ENCODE measurements at regions of chr7 and their contacts with region 1.

Region 1: DNA sequence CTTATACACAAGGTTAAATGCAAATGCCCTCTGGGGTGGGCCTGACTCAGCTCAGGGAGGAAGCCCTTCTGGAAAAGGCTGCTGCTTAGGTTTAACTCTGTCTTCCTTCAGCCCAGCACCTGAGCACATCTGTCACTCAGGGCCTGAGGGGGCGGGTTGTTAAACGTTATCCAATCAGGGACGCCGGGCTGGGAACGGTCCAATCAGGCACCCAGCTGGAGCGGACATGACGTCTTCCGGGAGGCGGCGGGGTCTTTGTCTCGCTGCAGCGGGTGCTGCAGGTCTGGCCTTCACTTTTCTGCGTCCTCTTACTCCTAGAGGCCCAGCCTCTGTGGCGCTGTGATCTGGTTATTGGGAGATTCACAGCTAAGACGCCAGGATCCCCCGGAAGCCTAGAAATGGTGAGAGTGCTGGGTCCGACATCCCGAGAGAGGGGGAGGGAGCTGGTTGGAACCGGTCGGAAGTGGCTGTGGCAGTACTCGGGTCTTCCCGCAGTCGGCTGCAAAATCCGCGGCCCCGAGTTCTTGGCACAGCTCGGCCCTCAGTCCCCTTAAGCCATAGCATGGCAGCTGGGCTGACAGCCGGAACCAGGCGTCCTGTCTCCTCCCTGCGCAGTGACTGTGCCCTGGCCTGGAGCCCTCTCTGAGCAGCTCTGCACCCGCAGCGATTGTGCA is at the start of gene ZNF138:
- DNase-seq: peak; percentile 91
- ATAC-seq: peak; percentile 100
- H3K4me3 ChIP-seq: peak within 1 kb of the TSS; percentile 90
- H3K27ac ChIP-seq: peak within 1 kb of the TSS; percentile 83
- H3K4me1 ChIP-seq: no peaks in the 10 kb centered on the region
- H3K27me3 ChIP-seq: no peaks in the 10 kb centered on the region
- CTCF ChIP-seq: no peak
- POLR2A ChIP-seq: peak; percentile 47; the same call in 1 of the 2 replicates
- RAD21 ChIP-seq: no peak
- total RNA-seq, gene ZNF138: 3.6 and 6.1 TPM in 2 replicates

Region 2: GRCh38 chr7:64371106-64371505 is 423.2 kb before region 1 on chr7:
- CTCF ChIA-PET with region 1: no interaction called
- POLR2A ChIA-PET with region 1: no interaction called
- dilution Hi-C with region 1: no loop called
- in situ Hi-C with region 1: no loop called
- intact Hi-C with region 1: no loop called
- DNase-seq: no peak
- ATAC-seq: no peak
- H3K4me3 ChIP-seq: no peak overlapping the region
- H3K27ac ChIP-seq: no peak overlapping the region
- H3K4me1 ChIP-seq: no peaks in the 10 kb centered on the region
- H3K27me3 ChIP-seq: no peaks in the 10 kb centered on the region
- CTCF ChIP-seq: no peak
- POLR2A ChIP-seq: no peak
- RAD21 ChIP-seq: no peak

Region 3: GRCh38 chr7:64494912-64495461 is 299.3 kb before region 1 on chr7:
- CTCF ChIA-PET with region 1: no interaction called
- POLR2A ChIA-PET with region 1: no interaction called
- dilution Hi-C with region 1: no loop called
- in situ Hi-C with region 1: no loop called
- intact Hi-C with region 1: no loop called
- DNase-seq: no peak
- ATAC-seq: peak; percentile 49
- H3K4me3 ChIP-seq: peak overlapping the region; percentile 10; the same call in 1 of the 2 replicates
- H3K27ac ChIP-seq: no peak overlapping the region
- H3K4me1 ChIP-seq: no peaks in the 10 kb centered on the region
- H3K27me3 ChIP-seq: no peaks in the 10 kb centered on the region
- CTCF ChIP-seq: no peak
- POLR2A ChIP-seq: no peak
- RAD21 ChIP-seq: no peak

Region 4: DNA sequence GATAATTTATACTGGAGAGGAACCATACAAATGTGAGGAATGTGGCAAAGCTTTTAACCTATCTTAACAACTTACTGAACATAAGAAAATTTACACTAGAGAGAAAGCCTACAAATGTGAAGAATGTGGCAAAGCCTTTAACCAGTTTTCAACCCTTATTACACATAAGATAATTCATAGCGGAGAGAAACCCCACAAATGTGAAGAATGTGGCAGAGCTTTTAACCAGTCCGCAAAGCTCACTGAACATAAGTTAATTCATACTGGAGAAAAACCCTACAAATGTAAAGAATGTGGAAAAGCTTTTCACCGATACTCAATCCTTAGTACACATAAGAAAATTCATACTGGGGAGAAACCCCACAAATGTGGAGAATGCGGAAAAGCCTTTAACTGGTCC is 37.8 kb after region 1 on chr7:
- CTCF ChIA-PET with region 1: no interaction called
- POLR2A ChIA-PET with region 1: no interaction called
- dilution Hi-C with region 1: no loop called
- in situ Hi-C with region 1: no loop called
- intact Hi-C with region 1: no loop called
- DNase-seq: no peak
- ATAC-seq: no peak
- H3K4me3 ChIP-seq: no peak overlapping the region
- H3K27ac ChIP-seq: no peak overlapping the region
- H3K4me1 ChIP-seq: no peaks in the 10 kb centered on the region
- H3K27me3 ChIP-seq: no peaks in the 10 kb centered on the region
- CTCF ChIP-seq: no peak
- POLR2A ChIP-seq: no peak
- RAD21 ChIP-seq: no peak

Region 5: DNA sequence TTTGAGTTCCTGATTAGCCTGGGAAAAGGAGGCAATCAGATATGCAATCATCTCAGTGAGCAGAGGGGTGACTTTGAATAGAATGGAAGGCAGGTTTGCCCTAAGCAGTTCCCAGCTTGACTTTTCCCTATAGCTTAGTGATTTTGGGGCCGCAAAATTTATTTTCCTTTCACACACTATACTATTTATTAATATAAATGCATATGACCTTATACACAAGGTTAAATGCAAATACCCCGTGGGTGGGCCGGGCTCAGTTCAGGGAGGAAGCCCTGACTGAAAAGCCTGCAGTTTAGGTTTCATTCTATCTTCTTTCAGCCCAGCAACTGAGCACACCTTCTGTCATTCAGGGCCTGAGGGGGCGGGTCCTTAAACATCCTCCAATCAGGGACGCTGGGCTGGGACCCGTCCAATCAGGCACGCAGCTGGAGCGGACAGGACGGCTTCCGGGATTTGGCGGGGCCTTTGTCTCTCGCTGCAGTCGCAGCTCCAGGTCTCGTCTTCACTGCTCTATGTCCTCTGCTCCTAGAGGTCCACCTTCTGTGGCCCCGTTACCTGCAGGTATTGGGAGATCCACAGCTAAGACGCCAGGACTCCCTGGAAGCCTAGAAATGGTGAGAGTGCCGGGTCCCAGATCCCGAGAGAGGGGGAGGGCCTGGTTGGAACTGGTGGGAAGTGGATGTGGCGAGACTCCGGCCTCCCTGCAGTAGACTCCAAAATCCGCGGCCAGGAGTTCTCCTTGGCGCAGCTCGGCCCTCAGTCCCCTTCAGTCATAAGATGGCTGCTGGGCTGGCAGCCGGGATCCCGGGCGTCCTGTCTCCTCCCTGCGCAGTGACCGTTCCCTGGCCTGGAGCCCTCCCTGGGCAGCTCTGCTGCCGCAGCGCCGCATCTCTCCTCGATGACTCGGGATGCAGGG is 108.8 kb after region 1 on chr7 and contains the start of gene ZNF273:
- CTCF ChIA-PET with region 1: no interaction called
- POLR2A ChIA-PET with region 1: no interaction called
- dilution Hi-C with region 1: no loop called
- in situ Hi-C with region 1: no loop called
- intact Hi-C with region 1: loop called (anchors 5 kb)
- DNase-seq: peak; percentile 84
- ATAC-seq: peak; percentile 98
- H3K4me3 ChIP-seq: peak within 1 kb of the TSS; percentile 87
- H3K27ac ChIP-seq: peak within 1 kb of the TSS; percentile 28; the same call in 1 of the 2 replicates
- H3K4me1 ChIP-seq: peaks cover 4% of the 10 kb centered on the region; the same call in 1 of the 2 replicates
- H3K27me3 ChIP-seq: no peaks in the 10 kb centered on the region
- CTCF ChIP-seq: no peak
- POLR2A ChIP-seq: peak; percentile 70; the same call in 1 of the 2 replicates
- RAD21 ChIP-seq: no peak
- total RNA-seq, gene ZNF273: 2.7 and 4.4 TPM in 2 replicates